Spleen (tissue), 13 donors: ENCODE measurements at regions of chr1 and their contacts with region 1.

Region 1: DNA sequence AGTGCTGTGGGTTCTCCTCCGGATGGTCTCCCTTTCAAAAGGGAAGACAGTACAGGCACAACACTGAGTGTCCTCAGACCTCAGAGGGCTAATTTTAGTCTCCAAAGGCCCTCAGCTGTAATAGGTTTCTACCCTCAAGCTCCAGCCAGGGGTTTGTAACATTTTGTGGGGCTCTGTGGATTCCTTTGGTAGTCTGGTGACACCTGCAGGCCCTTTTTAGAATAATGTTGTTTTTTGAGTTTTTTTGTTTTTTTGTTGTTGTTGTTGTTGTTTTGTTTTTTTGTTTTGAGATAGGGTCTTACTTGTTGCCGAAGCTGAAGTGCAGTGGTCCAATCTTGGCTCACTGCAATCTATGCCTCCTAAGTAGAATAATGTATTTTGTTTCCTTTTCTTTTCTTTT is 15.0 kb upstream of the TMEM201 start:
- DNase-seq: no peak
- H3K4me3 ChIP-seq: no peak overlapping the region
- H3K27ac ChIP-seq: no peak overlapping the region
- H3K4me1 ChIP-seq: no peaks in the 10 kb centered on the region
- H3K27me3 ChIP-seq: no peaks in the 10 kb centered on the region
- CTCF ChIP-seq: peak in 6 of 11 experiments; percentile 18 to 60 (median 34)
- POLR2A ChIP-seq: no peak

Region 2: GRCh38 chr1:9275567-9276034 is 298.1 kb before region 1 on chr1:
- intact Hi-C with region 1: no loop called
- DNase-seq: peak; percentile 84
- H3K4me3 ChIP-seq: no peak overlapping the region
- H3K27ac ChIP-seq: no peak overlapping the region
- H3K4me1 ChIP-seq: peaks cover 0 to 29% (median 8%) of the 10 kb centered on the region in 6 donors
- H3K27me3 ChIP-seq: peaks cover 0 to 4% (median 0%) of the 10 kb centered on the region in 7 donors
- CTCF ChIP-seq: no peak
- POLR2A ChIP-seq: no peak

Region 3: DNA sequence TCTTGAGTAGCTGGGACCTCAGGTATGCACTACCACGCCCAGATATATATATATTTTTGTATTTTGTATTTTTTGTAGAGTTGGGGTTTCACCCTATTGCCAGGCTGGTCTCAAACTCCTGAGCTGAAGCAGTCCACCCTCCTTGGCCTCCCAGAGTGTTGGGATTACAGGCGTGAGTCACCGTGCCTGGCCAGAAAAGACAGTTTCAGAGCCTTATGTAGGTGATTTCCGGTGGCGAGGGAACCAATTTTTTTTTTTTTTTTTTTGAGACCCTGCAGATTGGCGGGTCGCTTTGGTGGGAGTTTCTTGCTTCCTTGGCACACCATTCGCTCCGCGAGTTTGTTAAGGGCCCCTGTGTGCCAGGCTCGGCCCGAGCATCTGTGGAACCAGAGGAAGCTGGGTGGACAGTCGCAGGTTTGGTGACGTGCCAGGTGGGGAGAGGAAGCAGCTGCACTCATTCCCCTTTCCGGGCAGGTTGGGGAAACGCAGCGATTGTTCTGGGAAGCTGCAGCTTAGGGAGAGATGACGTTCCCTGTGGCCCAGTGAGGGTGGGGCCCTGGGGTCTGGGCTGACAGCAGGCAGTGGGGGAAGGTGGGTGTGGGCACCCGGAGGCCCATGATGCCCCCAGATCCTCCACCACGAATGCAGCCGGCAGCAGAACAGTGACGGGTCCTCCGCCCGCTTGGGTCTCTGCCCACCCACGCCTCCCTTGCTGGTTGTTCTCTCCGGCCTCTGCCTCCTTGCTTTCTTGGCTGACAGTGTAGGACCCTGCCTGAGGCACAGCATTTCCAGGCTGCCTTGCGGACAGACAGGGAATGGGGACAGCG is 255.9 kb before region 1 on chr1:
- intact Hi-C with region 1: no loop called
- DNase-seq: no peak
- H3K4me3 ChIP-seq: no peak overlapping the region
- H3K27ac ChIP-seq: no peak overlapping the region
- H3K4me1 ChIP-seq: peaks cover 0 to 47% (median 19%) of the 10 kb centered on the region in 6 donors
- H3K27me3 ChIP-seq: no peaks in the 10 kb centered on the region
- CTCF ChIP-seq: no peak
- POLR2A ChIP-seq: no peak

Region 4: GRCh38 chr1:9494929-9495758 is 78.6 kb before region 1 on chr1:
- intact Hi-C with region 1: loop called (anchors 5 kb)
- DNase-seq: peak; percentile 89
- H3K4me3 ChIP-seq: peak overlapping the region in 6 of 8 donors; percentile 23 to 67 (median 34)
- H3K27ac ChIP-seq: no peak overlapping the region
- H3K4me1 ChIP-seq: peaks cover 0 to 15% (median 10%) of the 10 kb centered on the region in 6 donors
- H3K27me3 ChIP-seq: peaks cover 0 to 31% (median 0%) of the 10 kb centered on the region in 7 donors
- CTCF ChIP-seq: peak; percentile 77 to 98 (median 96)
- POLR2A ChIP-seq: no peak